ENCODE measurements at regions of chr7 and their contacts with region 1.

Region 1: DNA sequence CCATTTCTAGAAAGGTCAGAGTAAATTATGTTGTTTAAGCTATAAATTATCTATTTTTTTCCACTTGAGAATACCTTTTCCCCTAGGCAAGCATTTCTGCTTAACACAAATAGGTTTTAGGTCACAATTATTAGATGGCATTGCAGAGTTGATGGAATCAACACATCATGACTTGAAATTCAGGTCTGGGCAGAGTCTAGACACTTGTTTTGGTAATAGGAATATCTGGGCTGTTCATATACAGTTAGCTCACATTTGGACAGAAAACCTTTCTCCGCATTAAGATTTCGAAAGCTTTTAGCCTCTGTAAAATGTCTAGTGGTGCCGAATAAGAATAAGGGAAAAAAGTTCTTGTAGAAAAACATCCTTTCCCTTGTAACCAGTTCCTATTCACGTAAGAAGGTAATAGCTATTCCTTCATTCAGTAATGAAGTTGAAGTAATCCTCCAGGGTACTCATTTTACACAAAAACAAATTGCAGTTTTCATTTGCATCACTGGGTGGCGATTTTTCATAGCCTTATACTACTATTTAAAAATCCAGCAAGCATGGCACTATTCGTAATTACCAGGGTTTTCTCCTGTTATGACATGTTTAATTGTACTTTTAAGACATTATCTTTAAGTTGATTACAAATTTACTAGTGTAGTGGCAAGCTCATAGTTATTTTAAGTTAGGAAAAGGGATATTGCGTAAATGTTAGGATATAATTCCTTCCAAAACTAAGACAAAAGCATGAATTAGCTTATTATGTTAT is 37.0 kb downstream of the RPA3 start:
- DNase-seq: peak; percentile 56
- ATAC-seq: peak; percentile 97
- H3K4me3 ChIP-seq: no peak overlapping the region
- H3K27ac ChIP-seq: no peak overlapping the region
- H3K4me1 ChIP-seq: peaks cover 3% of the 10 kb centered on the region; the same call in 1 of the 2 replicates
- H3K27me3 ChIP-seq: no peaks in the 10 kb centered on the region
- CTCF ChIP-seq: peak; percentile 44 to 67 (median 52); a peak in 5 of 6 replicates
- EP300 ChIP-seq: no peak
- POLR2A ChIP-seq: no peak
- RAD21 ChIP-seq: peak; percentile 86

Region 2: GRCh38 chr7:6375348-6376101 is 1305.8 kb before region 1 on chr7:
- CTCF ChIA-PET with region 1: no interaction called
- POLR2A ChIA-PET with region 1: no interaction called
- RAD21 ChIA-PET with region 1: no interaction called
- SMC1A ChIA-PET with region 1: no interaction called
- in situ Hi-C with region 1: no loop called
- intact Hi-C with region 1: no loop called
- DNase-seq: no peak
- ATAC-seq: peak; percentile 3
- H3K4me3 ChIP-seq: peak overlapping the region; percentile 83
- H3K27ac ChIP-seq: peak overlapping the region; percentile 78
- H3K4me1 ChIP-seq: peaks cover 10% of the 10 kb centered on the region
- H3K27me3 ChIP-seq: no peaks in the 10 kb centered on the region
- CTCF ChIP-seq: no peak
- EP300 ChIP-seq: no peak
- POLR2A ChIP-seq: no peak
- RAD21 ChIP-seq: no peak

Region 3: GRCh38 chr7:7696458-7697119 is 15.2 kb after region 1 on chr7:
- CTCF ChIA-PET with region 1: interaction called, 47 read pairs
- POLR2A ChIA-PET with region 1: no interaction called
- RAD21 ChIA-PET with region 1: interaction called, 35 read pairs
- SMC1A ChIA-PET with region 1: interaction called, 42 read pairs
- in situ Hi-C with region 1: no loop called
- intact Hi-C with region 1: no loop called
- DNase-seq: no peak
- ATAC-seq: no peak
- H3K4me3 ChIP-seq: no peak overlapping the region
- H3K27ac ChIP-seq: no peak overlapping the region
- H3K4me1 ChIP-seq: peaks cover 5% of the 10 kb centered on the region
- H3K27me3 ChIP-seq: no peaks in the 10 kb centered on the region
- CTCF ChIP-seq: no peak
- EP300 ChIP-seq: no peak
- POLR2A ChIP-seq: no peak
- RAD21 ChIP-seq: no peak

Region 4: DNA sequence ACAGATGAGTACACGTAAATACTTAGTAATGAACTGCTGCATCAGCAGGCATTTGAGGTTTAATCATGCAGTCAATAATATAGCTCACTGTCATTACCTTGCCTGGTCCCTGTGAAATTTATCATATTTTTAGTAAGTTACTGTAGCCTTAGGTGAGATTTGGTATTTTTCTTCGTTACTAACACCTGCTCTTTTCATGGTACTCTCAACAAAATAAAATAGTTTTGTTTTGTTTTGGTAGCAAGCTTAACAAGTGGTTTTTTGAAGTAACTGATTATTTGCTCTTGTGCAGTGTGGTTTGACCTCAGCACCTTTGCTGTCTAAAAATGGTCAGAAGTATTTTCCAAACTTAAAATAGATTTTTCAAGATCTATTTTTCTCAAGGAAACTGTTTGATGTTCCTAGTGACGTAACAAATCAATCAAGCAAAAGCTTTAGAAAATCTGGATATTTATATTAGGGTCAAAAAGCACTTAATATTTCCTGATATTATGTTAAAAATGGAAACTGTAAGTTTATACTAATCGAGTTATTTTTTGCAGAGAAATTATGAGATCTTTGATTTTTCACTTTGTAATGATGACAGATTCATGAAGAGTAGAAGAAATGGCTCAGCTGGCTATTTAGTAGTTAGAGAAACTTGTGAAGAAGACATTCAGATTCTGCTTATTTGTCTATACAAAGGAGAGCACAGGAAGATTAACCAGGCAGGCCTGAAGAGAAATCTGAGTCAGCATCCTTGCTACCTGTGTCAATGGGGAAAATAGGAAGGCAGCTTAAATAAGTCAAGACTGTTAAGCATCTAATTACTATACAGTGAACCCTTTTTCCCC is 58.1 kb after region 1 on chr7:
- CTCF ChIA-PET with region 1: interaction called, 22 read pairs
- POLR2A ChIA-PET with region 1: no interaction called
- RAD21 ChIA-PET with region 1: interaction called, 39 read pairs
- SMC1A ChIA-PET with region 1: interaction called, 40 read pairs
- in situ Hi-C with region 1: no loop called
- intact Hi-C with region 1: no loop called
- DNase-seq: no peak
- ATAC-seq: peak; percentile 88
- H3K4me3 ChIP-seq: no peak overlapping the region
- H3K27ac ChIP-seq: no peak overlapping the region
- H3K4me1 ChIP-seq: peaks cover 5% of the 10 kb centered on the region; the same call in 1 of the 2 replicates
- H3K27me3 ChIP-seq: no peaks in the 10 kb centered on the region
- CTCF ChIP-seq: no peak
- EP300 ChIP-seq: peak; percentile 62 to 98
- POLR2A ChIP-seq: no peak
- RAD21 ChIP-seq: no peak

Region 5: GRCh38 chr7:7816084-7816483 is 134.7 kb after region 1 on chr7:
- CTCF ChIA-PET with region 1: interaction called, 7 read pairs
- POLR2A ChIA-PET with region 1: interaction called, 4 read pairs
- RAD21 ChIA-PET with region 1: interaction called, 25 read pairs
- SMC1A ChIA-PET with region 1: interaction called, 14 read pairs
- in situ Hi-C with region 1: no loop called
- intact Hi-C with region 1: no loop called
- DNase-seq: peak; percentile 85
- ATAC-seq: peak; percentile 53
- H3K4me3 ChIP-seq: peak overlapping the region; percentile 32
- H3K27ac ChIP-seq: peak overlapping the region; percentile 67
- H3K4me1 ChIP-seq: peaks cover 43% of the 10 kb centered on the region
- H3K27me3 ChIP-seq: no peaks in the 10 kb centered on the region
- CTCF ChIP-seq: no peak
- EP300 ChIP-seq: peak; percentile 73 to 92
- POLR2A ChIP-seq: 0 out of 2 replicates have a peak, but pooled peaks have one; percentile 29
- RAD21 ChIP-seq: no peak

Region 6: GRCh38 chr7:7989133-7989984 is 308.0 kb after region 1 on chr7:
- CTCF ChIA-PET with region 1: interaction called, 3 read pairs
- POLR2A ChIA-PET with region 1: no interaction called
- RAD21 ChIA-PET with region 1: no interaction called
- SMC1A ChIA-PET with region 1: interaction called, 10 read pairs
- in situ Hi-C with region 1: no loop called
- intact Hi-C with region 1: no loop called
- DNase-seq: no peak
- ATAC-seq: no peak; the same call in 1 of the 3 replicates
- H3K4me3 ChIP-seq: no peak overlapping the region
- H3K27ac ChIP-seq: no peak overlapping the region
- H3K4me1 ChIP-seq: peaks cover 6% of the 10 kb centered on the region; the same call in 1 of the 2 replicates
- H3K27me3 ChIP-seq: no peaks in the 10 kb centered on the region
- CTCF ChIP-seq: no peak
- EP300 ChIP-seq: no peak
- POLR2A ChIP-seq: no peak
- RAD21 ChIP-seq: no peak

Region 7: DNA sequence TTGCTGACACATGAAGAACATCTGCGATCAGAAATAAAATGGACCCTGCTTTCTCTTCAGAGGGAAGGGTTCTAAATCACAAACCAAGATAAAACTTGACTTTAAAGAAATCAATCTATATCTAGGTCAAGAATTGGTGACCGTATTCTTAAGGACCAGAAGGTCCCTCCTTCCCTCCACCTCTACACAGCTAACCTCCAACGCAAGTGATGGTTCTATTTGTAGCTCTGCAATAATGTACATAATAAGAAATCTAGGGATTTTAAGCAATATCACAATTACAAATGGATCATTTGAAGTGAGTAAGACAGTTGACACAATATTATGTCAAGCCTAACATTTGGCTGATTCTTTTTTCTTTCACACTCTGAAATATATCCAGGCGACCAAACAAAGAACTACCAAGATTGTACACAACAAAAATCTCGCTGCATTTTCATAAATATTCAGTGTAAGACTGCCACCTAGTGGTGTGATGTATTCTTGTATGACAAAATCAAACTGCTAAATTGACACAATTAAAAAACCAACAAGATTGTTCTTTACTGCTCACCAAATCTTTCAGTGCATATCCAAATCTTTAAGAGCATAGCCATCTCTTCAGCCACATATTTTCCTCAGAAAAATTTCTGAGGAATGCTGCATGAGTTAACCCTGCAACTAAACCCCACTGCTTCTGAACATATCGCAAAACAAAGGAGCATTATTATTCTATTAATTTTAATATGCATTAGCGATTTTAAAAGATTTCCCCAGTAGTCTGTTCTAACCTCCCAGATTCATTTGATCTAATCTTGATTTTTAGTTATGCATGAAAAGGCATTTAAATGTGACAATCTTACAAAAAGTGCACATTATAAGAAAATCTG is 536.1 kb after region 1 on chr7:
- CTCF ChIA-PET with region 1: interaction called, 37 read pairs
- POLR2A ChIA-PET with region 1: no interaction called
- RAD21 ChIA-PET with region 1: interaction called, 56 read pairs
- SMC1A ChIA-PET with region 1: interaction called, 70 read pairs
- in situ Hi-C with region 1: loop called (anchors 10 kb)
- intact Hi-C with region 1: loop called (anchors 1 kb)
- DNase-seq: peak; percentile 43
- ATAC-seq: peak; percentile 80
- H3K4me3 ChIP-seq: no peak overlapping the region
- H3K27ac ChIP-seq: no peak overlapping the region
- H3K4me1 ChIP-seq: no peaks in the 10 kb centered on the region
- H3K27me3 ChIP-seq: no peaks in the 10 kb centered on the region
- CTCF ChIP-seq: peak; percentile 42 to 67 (median 45); a peak in 4 of 6 replicates
- EP300 ChIP-seq: no peak
- POLR2A ChIP-seq: no peak
- RAD21 ChIP-seq: peak; percentile 81

Region 8: DNA sequence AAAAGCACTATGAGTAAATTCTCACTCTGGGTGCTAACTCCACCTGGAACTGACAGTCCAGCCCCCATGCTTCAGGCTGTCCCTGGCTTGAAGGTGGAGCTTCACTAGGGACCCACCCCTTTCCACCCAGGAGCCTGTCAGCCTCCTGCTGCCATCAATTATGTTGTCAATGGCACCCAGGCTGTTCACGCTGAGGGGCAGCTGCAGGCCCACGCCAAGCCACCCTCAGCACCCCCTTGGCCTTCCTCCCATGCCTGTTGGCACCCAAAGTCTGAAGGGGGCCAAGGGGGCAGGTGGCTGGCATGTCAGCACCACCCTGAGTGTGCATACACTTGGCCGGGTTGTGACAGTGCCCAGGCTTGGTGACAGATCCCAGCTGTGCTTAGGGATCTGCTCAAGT is 901.4 kb after region 1 on chr7:
- CTCF ChIA-PET with region 1: no interaction called
- POLR2A ChIA-PET with region 1: no interaction called
- RAD21 ChIA-PET with region 1: no interaction called
- SMC1A ChIA-PET with region 1: no interaction called
- in situ Hi-C with region 1: no loop called
- intact Hi-C with region 1: no loop called
- DNase-seq: no peak
- ATAC-seq: no peak
- H3K4me3 ChIP-seq: no peak overlapping the region
- H3K27ac ChIP-seq: no peak overlapping the region
- H3K4me1 ChIP-seq: no peaks in the 10 kb centered on the region
- H3K27me3 ChIP-seq: no peaks in the 10 kb centered on the region
- CTCF ChIP-seq: no peak
- EP300 ChIP-seq: no peak
- POLR2A ChIP-seq: no peak
- RAD21 ChIP-seq: no peak